Endothelial cell of umbilical vein (primary cell): ENCODE measurements at regions of chr4 and their contacts with region 1.

Region 1: DNA sequence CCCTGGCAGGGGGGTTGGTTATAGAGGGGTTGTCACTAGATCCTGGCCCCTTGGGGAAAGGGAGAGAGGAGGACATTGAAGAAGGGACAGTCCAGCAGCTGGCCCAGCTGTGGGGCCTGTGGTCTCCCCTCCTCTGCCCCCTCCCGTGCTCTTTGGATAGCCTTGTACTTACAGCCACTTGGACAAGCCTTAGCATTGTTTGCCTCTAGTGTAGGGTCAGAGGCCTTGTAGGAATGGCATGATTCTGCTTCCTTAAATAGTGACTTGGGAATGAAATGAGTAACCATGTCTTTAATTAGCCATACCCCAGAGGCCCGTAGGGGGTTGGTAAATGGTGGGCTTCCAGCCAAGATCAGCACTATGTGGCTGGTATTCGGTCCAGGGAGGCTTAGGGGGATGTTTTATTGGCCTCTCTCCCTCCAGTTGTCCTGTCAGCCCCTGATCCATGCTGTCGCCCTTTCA is 230.6 kb downstream of the PTTG2 start:
- DNase-seq: peak; percentile 88
- H3K4me3 ChIP-seq: no peak overlapping the region
- H3K27ac ChIP-seq: peak overlapping the region; percentile 43
- H3K4me1 ChIP-seq: peaks cover 24% of the 10 kb centered on the region
- H3K27me3 ChIP-seq: peaks cover 5 to 11% of the 10 kb centered on the region in 2 experiments
- CTCF ChIP-seq: no peak
- POLR2A ChIP-seq: no peak

Region 2: GRCh38 chr4:38237139-38237538 is 46.4 kb after region 1 on chr4:
- CTCF ChIA-PET with region 1: no interaction called
- POLR2A ChIA-PET with region 1: no interaction called
- dilution Hi-C with region 1: no loop called
- intact Hi-C with region 1: loop called (anchors 5 kb)
- DNase-seq: peak; percentile 89
- H3K4me3 ChIP-seq: no peak overlapping the region
- H3K27ac ChIP-seq: peak overlapping the region; percentile 61
- H3K4me1 ChIP-seq: peaks cover 12% of the 10 kb centered on the region
- H3K27me3 ChIP-seq: no peaks in the 10 kb centered on the region
- CTCF ChIP-seq: peak in 1 of 2 donors; percentile 16
- POLR2A ChIP-seq: no peak